ENCODE measurements at regions of chr5 and their contacts with region 1.

Region 1: DNA sequence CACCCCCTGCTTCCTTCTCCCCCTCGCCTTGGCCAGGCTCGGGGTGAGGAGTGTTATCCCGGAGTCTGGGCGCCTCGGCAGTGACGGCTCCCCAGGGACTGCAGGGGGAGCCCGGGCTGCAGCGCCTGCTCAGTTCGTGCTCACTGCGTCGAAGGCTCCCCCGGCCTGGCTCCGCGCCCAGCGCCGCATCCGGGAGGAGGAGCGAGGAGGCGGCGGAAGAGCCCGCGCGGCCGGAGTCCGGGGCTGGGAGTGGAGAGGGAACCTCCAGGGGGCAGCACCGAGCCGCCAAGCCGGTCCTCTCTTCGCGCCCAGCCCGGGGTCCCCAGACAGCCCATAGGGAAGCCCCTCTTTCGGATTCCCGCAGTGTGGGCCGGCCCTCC is 1.3 kb upstream of the EGR1 start:
- DNase-seq: peak; percentile 90
- H3K4me3 Mint-ChIP-seq: peak overlapping the region; percentile 85
- H3K27ac Mint-ChIP-seq: peak overlapping the region; percentile 95
- H3K4me1 Mint-ChIP-seq: peaks cover 36% of the 10 kb centered on the region
- H3K27me3 Mint-ChIP-seq: peaks cover 18% of the 10 kb centered on the region

Region 2: DNA sequence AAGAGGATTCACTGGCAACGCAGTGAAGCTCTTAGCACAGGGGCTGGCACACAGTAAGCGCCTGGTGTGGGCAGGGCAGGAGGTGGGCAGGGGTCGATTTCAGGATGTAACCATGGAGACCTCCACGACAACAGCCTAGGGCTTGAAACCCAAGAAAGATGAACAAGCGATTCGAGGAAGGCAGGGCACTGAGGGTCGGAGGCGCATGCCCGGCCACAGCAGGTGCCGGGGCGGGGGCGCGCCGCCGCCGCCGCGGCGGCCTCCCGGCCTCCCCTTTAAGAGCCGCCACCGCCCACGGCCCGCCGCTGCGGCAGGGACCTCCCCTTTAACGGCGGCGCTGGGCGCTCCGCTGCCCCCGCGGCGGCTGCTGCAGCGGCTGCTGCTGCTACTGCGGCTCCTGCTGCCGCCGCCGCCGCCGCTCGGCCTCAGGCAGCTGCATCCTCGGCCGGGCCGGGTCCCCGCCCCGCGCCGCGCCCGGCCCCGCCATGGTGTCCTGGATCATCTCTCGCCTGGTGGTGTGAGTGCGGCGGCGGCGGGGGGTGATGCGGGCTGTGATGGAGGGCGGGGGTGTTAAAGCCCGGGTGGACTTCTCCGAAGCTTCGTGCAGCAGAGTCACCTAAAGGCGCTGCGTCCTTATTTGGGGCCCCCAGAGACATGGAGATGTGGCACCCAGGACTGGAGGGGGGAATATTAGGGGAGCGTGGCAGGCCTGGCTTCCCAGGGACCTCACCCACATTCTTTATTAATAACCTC is 25.1 kb before region 1 on chr5 and contains the start of gene REEP2:
- CTCF ChIA-PET with region 1: interaction called, 13 read pairs
- POLR2A ChIA-PET with region 1: no interaction called
- DNase-seq: peak; percentile 57
- H3K4me3 Mint-ChIP-seq: peak within 1 kb of the TSS; percentile 71
- H3K27ac Mint-ChIP-seq: peak within 1 kb of the TSS; percentile 41
- H3K4me1 Mint-ChIP-seq: peaks cover 9% of the 10 kb centered on the region
- H3K27me3 Mint-ChIP-seq: peaks cover 2% of the 10 kb centered on the region
- total RNA-seq, gene REEP2: 0.62 to 0.77 TPM

Region 3: DNA sequence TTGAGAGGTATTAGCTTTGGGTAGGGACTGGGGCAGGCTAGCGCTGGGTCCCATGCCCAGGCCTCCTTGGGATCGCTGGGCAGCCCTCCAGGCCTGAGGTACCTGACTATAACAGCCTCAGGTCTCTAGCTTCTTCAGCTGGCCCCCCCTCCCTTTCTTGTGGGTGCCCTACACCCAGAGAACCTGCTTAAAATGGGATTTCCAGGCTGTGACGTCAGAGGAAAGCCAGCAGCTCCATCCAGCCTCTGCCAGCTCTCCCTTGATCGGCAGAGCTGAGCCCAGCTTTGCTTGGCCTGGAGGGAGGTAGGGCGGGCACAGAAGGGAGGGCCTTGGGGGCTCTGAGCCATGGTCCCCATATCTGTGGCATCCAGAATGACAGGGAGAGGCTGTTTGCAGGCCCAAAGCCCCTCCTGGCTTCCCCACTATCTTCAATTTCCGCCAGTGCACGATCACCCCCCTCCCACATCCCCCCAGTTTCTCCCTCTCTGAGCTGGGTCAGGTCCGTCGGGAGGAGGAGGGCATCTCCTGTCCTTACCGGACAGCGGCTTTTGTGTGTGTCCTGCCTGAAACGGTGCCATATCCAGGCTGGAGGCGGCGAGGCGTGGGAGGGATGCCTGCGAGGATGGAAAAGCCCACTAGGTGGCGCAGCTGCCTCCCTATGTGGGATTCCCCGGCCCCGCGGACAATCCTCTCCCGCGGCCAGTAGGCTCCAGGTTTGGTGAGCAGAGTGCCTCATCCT is 14.3 kb before region 1 on chr5:
- CTCF ChIA-PET with region 1: interaction called, 31 read pairs
- POLR2A ChIA-PET with region 1: no interaction called
- DNase-seq: peak; percentile 76
- H3K4me3 Mint-ChIP-seq: peak overlapping the region; percentile 11
- H3K27ac Mint-ChIP-seq: no peak overlapping the region
- H3K4me1 Mint-ChIP-seq: peaks cover 5% of the 10 kb centered on the region
- H3K27me3 Mint-ChIP-seq: no peaks in the 10 kb centered on the region

Region 4: DNA sequence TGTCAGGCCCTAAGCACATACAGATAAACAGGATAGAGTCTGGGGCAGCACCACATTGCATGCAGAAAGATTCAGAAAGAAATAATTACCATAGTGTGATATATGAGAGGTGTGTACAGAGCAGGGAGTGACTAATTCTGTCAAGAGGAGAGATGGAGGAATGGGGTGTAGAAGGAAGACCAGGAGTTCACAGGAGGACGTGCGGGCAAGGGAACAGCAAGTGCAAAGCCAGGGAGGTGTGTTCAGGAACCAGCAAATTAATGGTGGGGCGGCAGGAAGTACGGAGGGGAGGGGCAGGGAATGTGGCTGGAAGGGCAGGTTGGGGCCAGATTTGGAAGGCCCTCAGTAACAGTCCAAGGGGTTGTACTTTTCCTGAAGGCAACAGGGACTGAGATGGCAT is 18.6 kb after region 1 on chr5:
- CTCF ChIA-PET with region 1: interaction called, 14 read pairs
- POLR2A ChIA-PET with region 1: no interaction called
- DNase-seq: no peak
- H3K4me3 Mint-ChIP-seq: no peak overlapping the region
- H3K27ac Mint-ChIP-seq: no peak overlapping the region
- H3K4me1 Mint-ChIP-seq: no peaks in the 10 kb centered on the region
- H3K27me3 Mint-ChIP-seq: peaks cover 10% of the 10 kb centered on the region

Region 5: DNA sequence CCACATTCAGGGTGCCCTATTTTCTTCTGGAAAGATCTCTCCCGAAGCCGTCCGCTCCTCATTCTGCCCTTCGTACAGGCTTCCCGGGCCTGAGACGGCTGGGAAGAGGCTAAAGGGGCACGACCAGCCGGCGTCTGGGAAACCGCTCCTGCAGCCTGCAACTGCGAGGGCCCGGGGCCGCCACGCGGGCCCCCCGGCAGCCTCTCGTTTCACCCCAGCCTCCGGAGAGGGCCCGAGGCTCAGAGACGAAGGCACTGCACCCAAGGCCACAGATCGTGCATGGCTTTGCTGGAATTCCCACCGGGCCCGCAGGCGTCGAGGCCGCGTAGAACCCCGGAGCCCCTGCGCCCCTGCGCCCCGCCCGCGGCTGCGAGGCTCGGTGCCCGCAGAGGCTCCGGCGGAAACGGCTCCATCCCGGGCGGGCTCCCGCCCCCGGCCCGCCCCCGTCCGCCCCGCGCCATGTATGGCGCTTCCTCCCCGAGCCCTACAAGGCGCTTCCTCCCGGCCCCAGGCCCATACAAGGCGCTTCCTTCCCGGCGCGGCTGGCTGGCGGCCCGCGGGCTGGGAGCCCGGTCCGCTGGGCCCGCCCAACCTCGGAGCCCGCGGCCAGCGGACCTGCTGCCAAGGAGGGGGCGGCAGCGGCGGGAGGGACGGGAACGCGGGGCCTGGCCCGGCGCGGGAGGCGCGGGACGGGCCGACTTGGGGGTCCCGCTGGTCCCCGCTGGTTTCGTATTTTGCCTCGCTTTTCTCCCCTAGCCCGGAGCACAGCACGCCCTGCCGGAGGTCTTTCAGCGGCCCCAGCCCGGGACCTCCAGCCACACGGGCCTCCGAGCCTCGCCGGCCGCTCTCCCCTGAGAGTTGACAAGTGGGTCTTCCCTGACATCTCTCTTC is 27.9 kb after region 1 on chr5:
- CTCF ChIA-PET with region 1: interaction called, 12 read pairs
- POLR2A ChIA-PET with region 1: no interaction called
- DNase-seq: peak; percentile 89
- H3K4me3 Mint-ChIP-seq: peak overlapping the region; percentile 84
- H3K27ac Mint-ChIP-seq: peak overlapping the region; percentile 46
- H3K4me1 Mint-ChIP-seq: peaks cover 12% of the 10 kb centered on the region
- H3K27me3 Mint-ChIP-seq: peaks cover 34% of the 10 kb centered on the region

Region 6: DNA sequence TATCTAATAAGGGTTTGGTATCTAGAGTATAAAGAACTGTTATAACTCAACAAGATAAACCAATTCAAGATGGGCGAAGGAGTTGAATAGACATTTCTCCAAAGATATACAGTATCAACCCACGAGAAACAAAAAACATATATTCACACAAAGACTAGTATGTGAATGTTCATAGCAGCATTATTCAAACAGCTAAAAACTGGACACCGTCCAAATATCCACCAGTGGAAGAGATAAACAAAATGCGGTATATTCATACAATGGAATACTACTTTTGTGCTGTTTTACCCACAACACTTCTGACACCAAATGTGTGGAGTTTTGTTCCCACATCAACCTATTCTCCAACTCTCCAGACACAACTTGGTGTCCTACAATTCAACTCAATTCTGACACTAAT is 34.4 kb after region 1 on chr5:
- CTCF ChIA-PET with region 1: interaction called, 21 read pairs
- POLR2A ChIA-PET with region 1: no interaction called
- DNase-seq: no peak
- H3K4me3 Mint-ChIP-seq: no peak overlapping the region
- H3K27ac Mint-ChIP-seq: no peak overlapping the region
- H3K4me1 Mint-ChIP-seq: no peaks in the 10 kb centered on the region
- H3K27me3 Mint-ChIP-seq: no peaks in the 10 kb centered on the region

Measured in activated CD4-positive, alpha-beta T cell treated with anti-CD3 and anti-CD28 coated beads, Interleukin-2, amount 10 ng/mL, durations not matched to agents 7 days and 5 days (primary cell).